Tibial artery (tissue), 4 donors: ENCODE measurements at regions of chr6 and their contacts with region 1.

Region 1: GRCh38 chr6:31739639-31740396 is at the start of gene MSH5:
- DNase-seq: peak; percentile 98 to 99
- H3K4me3 ChIP-seq: peak within 1 kb of the TSS; percentile 57 to 69
- H3K27ac ChIP-seq: peak within 1 kb of the TSS; percentile 34 to 58
- H3K4me1 ChIP-seq: peaks cover 0 to 33% (median 14%) of the 10 kb centered on the region in 4 donors
- H3K27me3 ChIP-seq: no peaks in the 10 kb centered on the region
- CTCF ChIP-seq: no peak

Region 2: DNA sequence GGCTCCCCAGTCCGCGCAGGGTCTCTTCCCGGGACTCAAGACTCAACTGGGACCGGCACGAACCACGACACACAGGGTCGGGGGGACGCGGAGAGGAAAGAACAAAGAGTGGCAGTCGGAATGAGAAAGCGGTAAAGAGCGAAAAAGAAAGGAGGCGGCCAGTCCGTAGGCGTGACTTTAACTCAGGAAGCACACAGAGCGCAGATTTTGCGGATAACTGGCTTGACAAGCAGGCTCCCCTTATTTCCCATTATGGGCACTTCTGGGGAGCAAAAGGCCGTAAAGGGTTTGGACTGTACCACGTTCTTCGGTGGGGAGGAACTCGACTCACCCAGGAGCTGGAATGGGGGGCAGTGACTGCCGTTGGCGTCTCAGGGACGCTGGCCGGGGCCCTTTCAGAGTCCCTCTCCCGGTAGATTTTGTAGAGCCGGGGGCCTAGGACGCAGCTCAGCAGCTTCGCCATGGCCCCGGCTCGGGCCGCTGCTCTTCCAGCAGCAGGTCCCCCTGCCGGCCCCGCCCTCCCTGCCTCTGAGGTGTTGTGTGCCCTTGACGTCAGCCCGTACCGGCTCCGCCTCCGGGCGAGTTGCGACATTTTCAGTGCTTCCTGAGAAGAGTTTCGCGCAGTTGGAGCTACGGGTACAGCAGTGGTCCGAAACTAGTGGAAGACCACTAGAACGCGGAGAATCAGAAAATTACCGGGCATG is 36.8 kb before region 1 on chr6 and contains the start of gene ABHD16A:
- intact Hi-C with region 1: loop called (anchors 5 kb)
- DNase-seq: peak; percentile 99 to 100
- H3K4me3 ChIP-seq: peak within 1 kb of the TSS; percentile 79 to 95
- H3K27ac ChIP-seq: peak within 1 kb of the TSS; percentile 94 to 99
- H3K4me1 ChIP-seq: peaks cover 6 to 27% (median 23%) of the 10 kb centered on the region in 4 donors
- H3K27me3 ChIP-seq: no peaks in the 10 kb centered on the region
- CTCF ChIP-seq: peak in 1 of 2 experiments; percentile 15

Region 3: GRCh38 chr6:31791324-31792089 is 51.7 kb after region 1 on chr6:
- intact Hi-C with region 1: loop called (anchors 5 kb)
- DNase-seq: no peak
- H3K4me3 ChIP-seq: no peak overlapping the region
- H3K27ac ChIP-seq: no peak overlapping the region
- H3K4me1 ChIP-seq: peaks cover 4 to 23% (median 18%) of the 10 kb centered on the region in 4 donors
- H3K27me3 ChIP-seq: no peaks in the 10 kb centered on the region
- CTCF ChIP-seq: peak; percentile 28 to 35